Activated naive CD4-positive, alpha-beta T cell treated with anti-CD3 and anti-CD28 coated beads, Interleukin-2, amount 10 ng/mL, durations not matched to agents 7 days and 5 days (primary cell): ENCODE measurements at regions of chr1 and their contacts with region 1.

Region 1: DNA sequence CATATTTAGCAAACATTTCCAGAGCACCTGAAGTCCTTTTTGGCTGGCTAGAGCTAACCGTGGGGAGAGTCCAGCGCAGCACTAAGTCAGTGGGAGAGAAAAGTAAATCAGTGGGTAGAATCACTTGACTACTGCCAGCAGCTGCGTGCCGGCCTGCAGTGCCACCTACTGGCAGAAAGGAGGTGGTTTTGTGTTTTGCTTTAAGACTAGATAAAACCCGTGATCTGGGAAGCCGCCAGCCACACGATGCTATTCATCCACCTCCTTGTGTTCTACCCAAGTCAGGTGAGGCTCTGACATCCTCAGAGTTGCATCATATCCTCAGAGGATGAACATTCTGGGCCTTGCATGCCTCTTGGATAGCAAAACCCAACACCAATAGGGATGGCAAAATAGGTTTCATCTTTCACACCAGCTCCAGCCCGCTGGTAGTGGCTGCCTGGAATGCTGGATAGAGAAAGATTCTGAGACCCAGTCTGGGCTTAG is 14.1 kb upstream of the HEYL start:
- DNase-seq: peak; percentile 84
- H3K4me3 Mint-ChIP-seq: no peak overlapping the region
- H3K27ac Mint-ChIP-seq: no peak overlapping the region
- H3K4me1 Mint-ChIP-seq: peaks cover 9% of the 10 kb centered on the region
- H3K27me3 Mint-ChIP-seq: peaks cover 36% of the 10 kb centered on the region

Region 2: GRCh38 chr1:39538588-39539465 is 114.8 kb before region 1 on chr1:
- CTCF ChIA-PET with region 1: interaction called, 10 read pairs
- DNase-seq: peak; percentile 62
- H3K4me3 Mint-ChIP-seq: no peak overlapping the region
- H3K27ac Mint-ChIP-seq: peak overlapping the region; percentile 78
- H3K4me1 Mint-ChIP-seq: no peaks in the 10 kb centered on the region
- H3K27me3 Mint-ChIP-seq: no peaks in the 10 kb centered on the region

Region 3: DNA sequence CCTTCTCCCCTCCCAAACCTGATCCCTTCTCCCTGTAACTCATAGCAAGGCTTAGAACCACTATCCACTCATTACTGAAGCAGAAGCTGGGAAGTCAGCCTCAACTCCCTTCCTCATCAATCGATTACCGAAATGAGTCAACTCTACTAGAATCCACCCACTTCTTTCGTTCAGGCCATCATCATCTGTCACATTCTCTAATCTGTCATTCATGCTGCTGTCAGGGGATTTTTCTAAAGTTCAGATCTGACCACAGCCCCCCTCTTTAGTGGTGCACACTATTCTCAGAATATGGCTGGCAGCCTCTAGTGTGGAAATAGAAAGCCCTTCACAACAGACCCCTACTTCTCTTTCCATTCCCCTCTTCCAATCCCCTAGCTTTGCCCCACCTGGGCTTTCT is 13.2 kb after region 1 on chr1:
- CTCF ChIA-PET with region 1: interaction called, 115 read pairs
- DNase-seq: no peak
- H3K4me3 Mint-ChIP-seq: no peak overlapping the region
- H3K27ac Mint-ChIP-seq: no peak overlapping the region
- H3K4me1 Mint-ChIP-seq: peaks cover 11% of the 10 kb centered on the region
- H3K27me3 Mint-ChIP-seq: peaks cover 54% of the 10 kb centered on the region

Region 4: GRCh38 chr1:39680751-39681150 is 27.2 kb after region 1 on chr1:
- CTCF ChIA-PET with region 1: interaction called, 17 read pairs
- DNase-seq: no peak
- H3K4me3 Mint-ChIP-seq: no peak overlapping the region
- H3K27ac Mint-ChIP-seq: peak overlapping the region; percentile 55
- H3K4me1 Mint-ChIP-seq: peaks cover 25% of the 10 kb centered on the region
- H3K27me3 Mint-ChIP-seq: peaks cover 52% of the 10 kb centered on the region

Region 5: GRCh38 chr1:39799770-39800470 is 146.3 kb after region 1 on chr1:
- CTCF ChIA-PET with region 1: interaction called, 10 read pairs
- DNase-seq: peak; percentile 72
- H3K4me3 Mint-ChIP-seq: peak overlapping the region; percentile 54
- H3K27ac Mint-ChIP-seq: peak overlapping the region; percentile 89
- H3K4me1 Mint-ChIP-seq: peaks cover 13% of the 10 kb centered on the region
- H3K27me3 Mint-ChIP-seq: peaks cover 11% of the 10 kb centered on the region

Region 6: GRCh38 chr1:39842836-39843235 is 189.2 kb after region 1 on chr1:
- CTCF ChIA-PET with region 1: no interaction called
- DNase-seq: no peak
- H3K4me3 Mint-ChIP-seq: no peak overlapping the region
- H3K27ac Mint-ChIP-seq: no peak overlapping the region
- H3K4me1 Mint-ChIP-seq: peaks cover 38% of the 10 kb centered on the region
- H3K27me3 Mint-ChIP-seq: no peaks in the 10 kb centered on the region

Region 7: GRCh38 chr1:39876144-39876543 is 222.6 kb after region 1 on chr1:
- CTCF ChIA-PET with region 1: no interaction called
- DNase-seq: no peak
- H3K4me3 Mint-ChIP-seq: no peak overlapping the region
- H3K27ac Mint-ChIP-seq: no peak overlapping the region
- H3K4me1 Mint-ChIP-seq: peaks cover 28% of the 10 kb centered on the region
- H3K27me3 Mint-ChIP-seq: no peaks in the 10 kb centered on the region

Region 8: GRCh38 chr1:40338745-40339424 is 685.3 kb after region 1 on chr1:
- CTCF ChIA-PET with region 1: no interaction called
- DNase-seq: peak; percentile 94
- H3K4me3 Mint-ChIP-seq: no peak overlapping the region
- H3K27ac Mint-ChIP-seq: no peak overlapping the region
- H3K4me1 Mint-ChIP-seq: peaks cover 48% of the 10 kb centered on the region
- H3K27me3 Mint-ChIP-seq: peaks cover 4% of the 10 kb centered on the region